Activated CD4-positive, alpha-beta memory T cell treated with anti-CD3 and anti-CD28 coated beads, Interleukin-2, amount 10 ng/mL, durations not matched to agents 7 days and 5 days (primary cell): ENCODE measurements at regions of chr20 and their contacts with region 1.

Region 1: GRCh38 chr20:47379433-47380150 is 23.1 kb upstream of the ZMYND8 start:
- DNase-seq: no peak
- H3K4me3 Mint-ChIP-seq: no peak overlapping the region
- H3K27ac Mint-ChIP-seq: peak overlapping the region; percentile 40
- H3K4me1 Mint-ChIP-seq: peaks cover 36% of the 10 kb centered on the region
- H3K27me3 Mint-ChIP-seq: no peaks in the 10 kb centered on the region

Region 2: GRCh38 chr20:47205577-47206498 is 173.8 kb before region 1 on chr20:
- CTCF ChIA-PET with region 1: interaction called, 15 read pairs
- POLR2A ChIA-PET with region 1: no interaction called
- DNase-seq: no peak
- H3K4me3 Mint-ChIP-seq: no peak overlapping the region
- H3K27ac Mint-ChIP-seq: no peak overlapping the region
- H3K4me1 Mint-ChIP-seq: no peaks in the 10 kb centered on the region
- H3K27me3 Mint-ChIP-seq: no peaks in the 10 kb centered on the region

Region 3: DNA sequence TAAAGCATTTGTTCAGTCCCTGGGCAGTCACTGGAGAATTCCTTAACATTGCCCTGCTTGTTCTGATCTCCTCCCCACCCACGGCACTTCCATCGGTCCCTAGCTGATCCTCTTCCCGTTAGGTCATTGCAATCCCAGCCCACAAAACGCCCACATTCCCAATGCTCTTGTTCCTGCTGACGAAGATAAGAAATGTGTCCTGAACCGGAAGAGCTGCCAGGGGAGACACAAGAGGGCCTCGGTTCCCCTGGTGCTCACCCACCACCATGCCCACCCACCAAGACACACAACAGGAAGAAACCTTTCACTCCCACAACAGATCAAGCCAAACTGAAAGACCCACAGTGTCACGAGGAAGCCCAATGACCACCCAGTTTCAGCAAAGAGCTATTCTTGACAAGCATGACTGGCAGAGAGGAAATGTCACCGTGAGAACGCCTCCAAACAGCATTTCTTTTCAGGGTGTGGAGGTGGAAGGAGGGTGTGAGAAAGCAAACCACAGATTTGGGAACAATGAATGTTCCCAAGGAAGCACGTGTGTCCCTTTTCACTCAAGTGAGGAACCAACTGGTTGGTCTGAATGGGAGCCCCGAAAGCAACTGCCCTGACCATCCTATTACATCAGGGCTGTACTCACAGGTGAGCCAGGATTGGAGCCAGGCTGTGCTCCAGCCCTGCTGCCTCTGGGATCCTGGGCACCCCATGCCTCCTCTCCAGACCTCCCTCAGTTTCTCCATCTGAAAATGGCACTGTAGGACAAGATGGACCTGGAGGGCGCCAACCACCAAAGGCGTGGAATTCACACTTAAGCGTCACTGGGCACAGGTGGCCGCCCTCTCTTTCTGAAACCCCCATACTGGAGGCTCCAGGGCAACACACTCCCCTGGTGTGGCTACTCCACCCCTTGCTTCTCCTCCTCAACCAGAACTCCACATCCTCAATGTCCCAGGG is 120.6 kb before region 1 on chr20:
- CTCF ChIA-PET with region 1: interaction called, 21 read pairs
- POLR2A ChIA-PET with region 1: interaction called, 3 read pairs
- DNase-seq: no peak
- H3K4me3 Mint-ChIP-seq: no peak overlapping the region
- H3K27ac Mint-ChIP-seq: no peak overlapping the region
- H3K4me1 Mint-ChIP-seq: peaks cover 8% of the 10 kb centered on the region
- H3K27me3 Mint-ChIP-seq: no peaks in the 10 kb centered on the region

Region 4: GRCh38 chr20:47296950-47297349 is 82.6 kb before region 1 on chr20:
- CTCF ChIA-PET with region 1: interaction called, 15 read pairs
- POLR2A ChIA-PET with region 1: no interaction called
- DNase-seq: no peak
- H3K4me3 Mint-ChIP-seq: no peak overlapping the region
- H3K27ac Mint-ChIP-seq: no peak overlapping the region
- H3K4me1 Mint-ChIP-seq: peaks cover 10% of the 10 kb centered on the region
- H3K27me3 Mint-ChIP-seq: no peaks in the 10 kb centered on the region

Region 5: GRCh38 chr20:47392015-47392720 is 12.6 kb after region 1 on chr20:
- CTCF ChIA-PET with region 1: interaction called, 21 read pairs
- POLR2A ChIA-PET with region 1: interaction called, 3 read pairs
- DNase-seq: no peak
- H3K4me3 Mint-ChIP-seq: no peak overlapping the region
- H3K27ac Mint-ChIP-seq: no peak overlapping the region
- H3K4me1 Mint-ChIP-seq: peaks cover 21% of the 10 kb centered on the region
- H3K27me3 Mint-ChIP-seq: no peaks in the 10 kb centered on the region

Region 6: GRCh38 chr20:47423586-47423985 is 44.0 kb after region 1 on chr20:
- CTCF ChIA-PET with region 1: no interaction called
- POLR2A ChIA-PET with region 1: no interaction called
- DNase-seq: no peak
- H3K4me3 Mint-ChIP-seq: no peak overlapping the region
- H3K27ac Mint-ChIP-seq: no peak overlapping the region
- H3K4me1 Mint-ChIP-seq: no peaks in the 10 kb centered on the region
- H3K27me3 Mint-ChIP-seq: no peaks in the 10 kb centered on the region

Region 7: GRCh38 chr20:47445291-47445690 is 65.7 kb after region 1 on chr20:
- CTCF ChIA-PET with region 1: no interaction called
- POLR2A ChIA-PET with region 1: no interaction called
- DNase-seq: no peak
- H3K4me3 Mint-ChIP-seq: no peak overlapping the region
- H3K27ac Mint-ChIP-seq: no peak overlapping the region
- H3K4me1 Mint-ChIP-seq: peaks cover 3% of the 10 kb centered on the region
- H3K27me3 Mint-ChIP-seq: no peaks in the 10 kb centered on the region

Region 8: GRCh38 chr20:47620808-47621805 is 241.5 kb after region 1 on chr20:
- CTCF ChIA-PET with region 1: interaction called, 58 read pairs
- POLR2A ChIA-PET with region 1: interaction called, 4 read pairs
- DNase-seq: no peak
- H3K4me3 Mint-ChIP-seq: no peak overlapping the region
- H3K27ac Mint-ChIP-seq: no peak overlapping the region
- H3K4me1 Mint-ChIP-seq: peaks cover 40% of the 10 kb centered on the region
- H3K27me3 Mint-ChIP-seq: no peaks in the 10 kb centered on the region